Upper lobe of right lung (tissue), 1 donor: ENCODE measurements at regions of chr12 and their contacts with region 1.

Region 1: DNA sequence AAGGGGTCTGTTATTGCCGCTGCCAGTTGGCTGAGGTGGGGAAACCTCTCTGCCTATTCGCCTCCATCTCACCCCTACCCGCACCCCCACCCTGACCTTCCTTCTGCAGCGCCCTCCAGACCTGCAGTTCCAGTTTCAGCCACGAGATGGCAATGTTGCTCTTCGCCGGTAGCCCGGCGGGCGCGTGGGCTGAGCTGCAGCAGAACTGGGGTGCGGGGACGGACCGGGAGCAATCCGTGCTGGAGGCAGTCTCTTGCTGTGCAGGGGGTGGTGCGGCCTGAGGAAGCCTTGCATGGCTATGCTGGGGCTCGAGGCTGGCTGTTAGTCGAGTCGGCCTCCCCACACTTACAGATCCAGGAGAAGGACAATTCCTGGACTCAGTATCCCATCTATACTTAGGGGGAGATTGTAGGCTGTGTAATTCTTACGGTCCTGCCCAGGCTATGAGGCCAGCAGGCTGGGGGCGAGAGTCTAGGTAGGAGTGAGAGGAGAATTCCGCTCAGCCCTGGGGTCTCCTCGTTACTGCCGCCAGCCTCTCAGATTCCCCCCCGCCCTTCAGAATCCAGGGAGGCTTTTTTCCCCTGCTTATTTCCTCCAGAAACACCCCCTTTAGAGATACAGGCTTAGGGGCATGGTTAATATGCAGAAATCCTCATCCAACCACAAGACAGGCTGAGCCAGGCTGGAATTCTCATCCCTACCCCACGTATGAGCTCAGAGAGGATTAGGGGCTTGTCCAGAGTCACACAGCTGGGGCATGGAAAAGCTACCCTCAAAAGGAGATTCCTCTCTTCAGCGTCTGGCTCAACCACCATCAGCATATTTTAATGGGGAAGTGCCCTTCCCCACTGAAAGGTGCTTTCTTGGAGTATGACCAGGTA is 118.2 kb downstream of the AACS start:
- DNase-seq: peak; percentile 86
- ATAC-seq: peak; percentile 89
- H3K4me3 ChIP-seq: no peak overlapping the region
- H3K27ac ChIP-seq: no peak overlapping the region
- H3K4me1 ChIP-seq: peaks cover 16% of the 10 kb centered on the region
- H3K27me3 ChIP-seq: peaks cover 37% of the 10 kb centered on the region
- CTCF ChIP-seq: peak; percentile 100

Region 2: DNA sequence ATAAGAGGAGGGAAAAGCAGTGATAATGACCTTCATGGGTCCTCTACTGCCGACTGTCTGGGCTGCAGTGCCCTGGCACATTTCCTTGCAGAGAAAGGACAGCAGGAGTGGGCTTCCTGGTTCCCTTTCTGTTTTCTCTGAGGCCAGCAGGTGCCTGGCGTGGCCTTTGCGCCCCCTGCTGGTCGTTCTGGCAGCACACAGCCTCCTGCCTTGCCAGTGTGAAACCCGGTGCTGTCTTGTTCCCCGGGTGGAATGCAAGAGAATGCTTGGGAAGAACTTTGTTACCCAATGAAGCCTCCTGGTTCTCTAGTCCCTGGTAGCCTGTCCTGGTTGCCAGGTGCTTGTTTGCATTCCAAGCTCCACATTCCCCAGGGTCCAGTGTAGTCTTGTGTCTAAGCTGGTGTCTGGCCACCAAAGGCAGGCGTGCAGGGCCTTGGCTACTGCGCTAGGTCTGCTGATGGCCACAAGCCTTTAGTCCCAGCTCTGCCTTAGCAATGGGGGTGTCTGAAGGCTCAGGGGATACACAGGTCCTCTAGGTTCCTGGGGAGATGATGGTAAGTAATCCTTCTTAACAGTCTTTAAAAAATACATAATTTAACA is 1691.1 kb after region 1 on chr12:
- intact Hi-C with region 1: loop called (anchors 10 kb)
- DNase-seq: peak; percentile 79
- ATAC-seq: peak; percentile 86
- H3K4me3 ChIP-seq: no peak overlapping the region
- H3K27ac ChIP-seq: no peak overlapping the region
- H3K4me1 ChIP-seq: no peaks in the 10 kb centered on the region
- H3K27me3 ChIP-seq: no peaks in the 10 kb centered on the region
- CTCF ChIP-seq: peak; percentile 91